ENCODE measurements at regions of chr4 and their contacts with region 1.

Region 1: DNA sequence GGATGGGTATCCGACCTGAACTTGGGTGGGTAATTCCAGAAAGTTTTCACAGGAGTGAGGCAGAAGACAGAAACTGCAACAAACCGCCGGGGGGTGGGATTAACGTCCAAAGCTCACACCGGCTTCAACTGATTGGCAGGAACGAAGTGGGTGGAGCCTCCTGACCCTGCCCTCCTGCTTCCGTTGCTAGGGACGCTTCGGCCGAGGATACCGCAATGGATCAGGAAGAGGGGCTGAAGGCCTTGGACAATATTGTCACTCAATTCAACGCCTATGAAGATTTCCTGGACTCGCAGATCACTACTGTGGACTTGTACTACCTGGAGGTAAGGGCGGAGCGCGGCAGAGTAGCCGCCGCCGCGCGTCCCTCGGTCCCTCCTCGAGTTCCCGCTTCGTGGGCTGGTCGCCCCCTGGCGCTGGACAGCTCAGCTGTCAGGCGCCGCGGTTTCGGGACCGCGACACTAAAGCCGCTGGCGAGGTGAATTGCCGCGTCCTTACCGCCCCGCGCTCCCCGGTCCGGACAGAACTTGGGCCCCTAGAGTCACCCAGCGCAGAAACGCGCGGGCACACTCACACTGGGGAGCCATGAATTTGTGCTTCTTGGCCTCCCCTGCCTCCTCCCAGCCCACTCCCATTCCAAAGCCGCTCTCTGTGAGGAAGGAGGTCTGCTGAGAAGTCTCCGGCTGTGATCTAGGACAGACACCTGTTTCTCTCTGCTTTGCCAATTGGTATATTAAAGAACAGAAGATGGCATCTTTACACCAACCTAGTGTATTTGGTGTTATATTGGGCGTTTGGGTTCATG is at the start of gene CFAP299:
- DNase-seq: peak; percentile 74
- H3K4me3 ChIP-seq: peak within 1 kb of the TSS; percentile 83
- CTCF ChIP-seq: peak; percentile 64

Region 2: DNA sequence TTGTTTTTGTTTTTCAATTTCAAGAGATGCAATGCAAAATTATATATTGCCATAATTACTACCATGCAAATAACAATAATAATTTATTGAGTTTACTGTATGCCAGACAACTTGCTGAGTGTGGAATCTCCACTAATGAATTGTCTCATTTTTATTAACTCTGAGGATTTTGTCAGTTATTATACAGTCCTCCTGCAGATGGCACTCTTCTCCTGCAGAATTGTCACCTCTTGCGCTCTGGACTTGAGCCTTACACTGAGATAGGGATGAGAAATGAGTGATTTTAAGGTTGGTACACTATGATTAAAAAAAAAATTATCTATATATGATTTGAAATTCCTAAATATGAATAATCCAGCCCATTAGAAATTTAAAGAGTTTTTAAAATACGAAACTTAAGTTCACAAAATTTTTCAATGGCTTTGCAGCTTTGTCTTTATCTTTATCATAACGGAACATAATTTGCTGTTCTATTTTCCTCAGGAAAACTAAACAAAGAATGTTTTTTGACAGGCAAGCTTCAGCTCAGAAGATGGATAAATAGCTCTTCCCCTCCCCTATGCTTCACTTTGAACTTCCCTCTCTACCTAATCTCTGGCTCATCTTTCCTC is 1383.8 kb before region 1 on chr4:
- in situ Hi-C with region 1: loop called (anchors 25 kb)
- DNase-seq: peak; percentile 28
- H3K4me3 ChIP-seq: no peak overlapping the region
- CTCF ChIP-seq: peak; percentile 68

Region 3: GRCh38 chr4:79650794-79651431 is 684.8 kb before region 1 on chr4:
- in situ Hi-C with region 1: loop called (anchors 25 kb)
- DNase-seq: peak; percentile 65
- H3K4me3 ChIP-seq: peak overlapping the region; percentile 15
- CTCF ChIP-seq: no peak

Measured in astrocyte of the cerebellum (primary cell).